ENCODE measurements at regions of chr2 and their contacts with region 1.

Region 1: GRCh38 chr2:64234785-64235184 is 90.6 kb upstream of the PELI1 start:
- DNase-seq: no peak
- H3K4me3 ChIP-seq: no peak overlapping the region
- H3K27ac ChIP-seq: no peak overlapping the region
- H3K4me1 ChIP-seq: peaks cover 0 to 17% (median 10%) of the 10 kb centered on the region in 4 donors
- H3K27me3 ChIP-seq: no peaks in the 10 kb centered on the region
- CTCF ChIP-seq: no peak
- EP300 ChIP-seq: no peak
- POLR2A ChIP-seq: no peak

Region 2: GRCh38 chr2:64273524-64274398 is 39.0 kb after region 1 on chr2:
- intact Hi-C with region 1: loop called (anchors 5 kb)
- DNase-seq: peak; percentile 83
- H3K4me3 ChIP-seq: peak overlapping the region in 2 of 4 donors; percentile 5 to 18
- H3K27ac ChIP-seq: peak overlapping the region; percentile 66 to 82 (median 75)
- H3K4me1 ChIP-seq: peaks cover 0 to 36% (median 27%) of the 10 kb centered on the region in 4 donors
- H3K27me3 ChIP-seq: no peaks in the 10 kb centered on the region
- CTCF ChIP-seq: no peak
- EP300 ChIP-seq: no peak
- POLR2A ChIP-seq: no peak

Region 3: DNA sequence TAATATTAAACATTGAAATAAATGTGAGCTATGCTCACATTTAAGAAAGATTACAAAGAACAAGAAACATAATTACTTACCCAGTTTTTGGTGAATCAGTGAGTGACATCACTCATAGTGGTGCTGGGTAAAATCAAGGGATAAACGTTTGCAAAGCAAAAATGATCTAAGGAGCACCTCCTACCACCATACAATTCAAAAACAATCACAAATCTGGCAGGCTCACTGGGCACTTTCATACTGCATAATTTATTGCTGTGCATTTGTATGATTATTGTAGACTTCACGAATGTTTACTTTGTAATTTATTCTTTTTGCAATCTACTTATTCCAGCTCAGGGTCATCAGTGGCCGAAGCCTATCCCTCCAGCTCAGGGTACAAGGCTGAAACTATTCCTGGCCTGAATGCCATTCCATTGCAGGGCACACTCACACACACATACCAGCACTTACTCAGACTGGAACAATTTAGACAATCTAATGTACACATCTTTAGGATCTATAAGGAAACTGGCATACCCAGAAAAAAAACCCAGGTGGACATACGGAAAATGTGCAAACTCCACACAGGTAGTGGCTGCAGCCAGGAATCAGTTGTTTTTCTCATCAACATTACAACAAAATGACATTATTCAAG is 323.8 kb after region 1 on chr2:
- intact Hi-C with region 1: no loop called
- DNase-seq: no peak
- H3K4me3 ChIP-seq: no peak overlapping the region
- H3K27ac ChIP-seq: no peak overlapping the region
- H3K4me1 ChIP-seq: peaks cover 0 to 6% (median 0%) of the 10 kb centered on the region in 4 donors
- H3K27me3 ChIP-seq: no peaks in the 10 kb centered on the region
- CTCF ChIP-seq: no peak
- EP300 ChIP-seq: no peak
- POLR2A ChIP-seq: no peak

Measured in sigmoid colon (tissue), 7 donors.